OCI-LY7 (cell line): ENCODE measurements at regions of chr19 and their contacts with region 1.

Region 1: GRCh38 chr19:17282488-17283255 is 971 bp downstream of the ANKLE1 start:
- DNase-seq: peak; percentile 92
- H3K4me3 ChIP-seq: peak overlapping the region; percentile 83
- H3K27ac ChIP-seq: peak overlapping the region; percentile 69
- H3K4me1 ChIP-seq: peaks cover 22% of the 10 kb centered on the region
- CTCF ChIP-seq: peak; percentile 90

Region 2: GRCh38 chr19:17069218-17069617 is 213.5 kb before region 1 on chr19:
- CTCF ChIA-PET with region 1: no interaction called
- POLR2A ChIA-PET with region 1: no interaction called
- intact Hi-C with region 1: loop called (anchors 1 kb)
- DNase-seq: peak; percentile 35
- H3K4me3 ChIP-seq: no peak overlapping the region
- H3K27ac ChIP-seq: peak overlapping the region; percentile 40
- H3K4me1 ChIP-seq: peaks cover 58% of the 10 kb centered on the region
- CTCF ChIP-seq: peak; percentile 48

Region 3: DNA sequence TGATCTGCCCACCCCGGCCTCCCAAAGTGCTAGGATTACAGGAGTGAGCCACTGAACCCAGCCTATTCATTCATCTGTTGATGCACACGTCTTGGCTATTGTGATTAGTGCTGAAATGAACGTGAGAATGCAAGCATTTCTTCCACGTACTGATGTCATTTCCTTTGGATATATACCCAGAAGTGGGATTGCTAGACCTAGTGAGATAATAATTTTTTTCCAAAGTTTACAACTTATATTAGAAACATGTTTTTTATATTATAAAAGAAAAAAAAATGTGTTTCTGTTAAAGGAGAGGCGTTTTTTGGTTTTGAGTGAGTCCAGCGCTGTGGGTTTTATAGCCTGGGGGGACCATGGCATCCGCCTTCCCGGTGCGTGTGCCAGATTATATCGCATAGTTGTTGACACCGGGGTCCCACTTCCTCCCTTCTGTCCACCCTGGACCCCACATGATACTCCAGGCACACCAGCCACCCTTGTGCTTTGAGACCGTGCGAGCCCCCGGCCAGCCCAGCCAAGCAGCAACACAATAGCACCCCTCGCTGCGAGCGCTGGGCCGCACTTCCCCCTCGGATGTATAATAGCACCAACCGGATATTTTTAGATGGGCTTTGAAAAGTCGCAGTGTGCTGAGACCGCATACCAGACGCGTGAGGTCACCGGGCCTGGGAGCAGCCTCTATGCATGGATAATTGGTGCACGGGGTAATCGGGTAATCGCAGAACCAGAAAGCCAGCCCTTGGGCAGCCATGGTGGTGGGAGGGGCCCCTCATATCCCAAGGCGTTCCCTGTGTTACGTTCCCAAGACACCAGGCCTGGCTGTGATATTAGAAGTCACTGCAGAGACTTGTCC is 147.4 kb before region 1 on chr19:
- CTCF ChIA-PET with region 1: no interaction called
- POLR2A ChIA-PET with region 1: no interaction called
- intact Hi-C with region 1: loop called (anchors 5 kb)
- DNase-seq: peak; percentile 91
- H3K4me3 ChIP-seq: peak overlapping the region; percentile 39
- H3K27ac ChIP-seq: peak overlapping the region; percentile 74
- H3K4me1 ChIP-seq: peaks cover 57% of the 10 kb centered on the region
- CTCF ChIP-seq: peak; percentile 54; the same call in 1 of the 2 replicates

Region 4: DNA sequence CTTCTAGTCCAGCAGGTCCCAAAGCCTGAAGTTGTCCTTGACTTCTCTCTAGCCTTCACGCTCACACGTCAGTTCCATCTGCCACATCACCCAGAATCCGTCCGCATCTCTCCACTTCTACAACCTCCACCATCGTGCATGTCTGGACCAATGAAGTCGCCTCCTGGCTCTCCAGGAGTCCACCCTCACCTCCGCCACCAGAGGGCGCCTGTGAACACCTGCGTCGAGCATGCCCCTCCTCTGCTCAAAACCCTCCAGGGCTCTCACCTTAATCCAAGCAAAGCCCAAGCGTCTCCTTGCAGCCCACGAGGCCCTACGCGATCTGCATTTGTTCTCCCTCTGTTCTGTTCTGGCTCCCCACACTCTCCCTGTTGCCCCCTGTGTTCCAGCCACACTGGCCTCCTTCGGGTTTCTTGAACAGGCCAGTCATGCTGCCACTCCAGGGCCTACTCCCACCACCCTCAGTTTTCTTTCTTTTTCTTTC is 21.8 kb before region 1 on chr19:
- CTCF ChIA-PET with region 1: interaction called, 3 read pairs
- POLR2A ChIA-PET with region 1: interaction called, 19 read pairs
- intact Hi-C with region 1: loop called (anchors 1 kb)
- DNase-seq: peak; percentile 93
- H3K4me3 ChIP-seq: no peak overlapping the region
- H3K27ac ChIP-seq: peak overlapping the region; percentile 39
- H3K4me1 ChIP-seq: peaks cover 37% of the 10 kb centered on the region
- CTCF ChIP-seq: peak; percentile 95

Region 5: GRCh38 chr19:17266975-17267788 is 15.5 kb before region 1 on chr19 and contains the start of gene BABAM1:
- CTCF ChIA-PET with region 1: interaction called, 4 read pairs
- POLR2A ChIA-PET with region 1: interaction called, 28 read pairs
- intact Hi-C with region 1: no loop called
- DNase-seq: peak; percentile 99
- H3K4me3 ChIP-seq: peak within 1 kb of the TSS; percentile 99
- H3K27ac ChIP-seq: peak within 1 kb of the TSS; percentile 83
- H3K4me1 ChIP-seq: peaks cover 41% of the 10 kb centered on the region
- CTCF ChIP-seq: no peak
- total RNA-seq, gene BABAM1: 79.0 and 79.7 TPM in 2 replicates

Region 6: DNA sequence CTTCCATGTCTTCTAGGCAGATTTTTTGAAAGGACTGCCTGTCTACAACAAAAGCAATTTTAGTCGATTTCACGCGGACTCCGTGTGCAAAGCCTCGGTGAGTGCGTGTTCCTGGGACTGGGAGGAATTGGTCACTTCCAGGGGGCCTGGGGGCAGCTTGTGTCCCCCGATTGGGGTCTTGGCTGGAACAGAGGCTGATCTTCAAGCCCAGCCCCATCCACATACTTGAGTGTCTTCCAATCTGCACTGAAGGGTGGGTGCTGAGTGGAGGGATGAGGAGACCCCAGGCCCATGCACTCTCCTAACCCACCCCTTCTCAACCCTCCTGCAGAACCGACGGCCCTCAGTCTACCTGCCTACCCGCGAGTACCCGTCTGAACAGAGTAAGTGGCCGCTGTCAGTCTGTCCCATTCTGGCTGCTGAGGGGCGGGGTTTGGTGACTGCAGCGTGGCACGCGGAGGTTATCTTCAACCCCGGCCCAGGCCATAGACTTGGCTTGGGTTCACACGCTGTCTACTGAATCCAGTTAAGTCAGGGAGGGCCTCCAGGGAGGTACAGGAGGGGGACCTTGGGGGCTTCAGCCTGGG is 31.4 kb after region 1 on chr19:
- CTCF ChIA-PET with region 1: no interaction called
- POLR2A ChIA-PET with region 1: no interaction called
- intact Hi-C with region 1: no loop called
- DNase-seq: no peak
- H3K4me3 ChIP-seq: no peak overlapping the region
- H3K27ac ChIP-seq: no peak overlapping the region
- H3K4me1 ChIP-seq: peaks cover 9% of the 10 kb centered on the region
- CTCF ChIP-seq: no peak